ENCODE measurements at regions of chr6 and their contacts with region 1.

Region 1: DNA sequence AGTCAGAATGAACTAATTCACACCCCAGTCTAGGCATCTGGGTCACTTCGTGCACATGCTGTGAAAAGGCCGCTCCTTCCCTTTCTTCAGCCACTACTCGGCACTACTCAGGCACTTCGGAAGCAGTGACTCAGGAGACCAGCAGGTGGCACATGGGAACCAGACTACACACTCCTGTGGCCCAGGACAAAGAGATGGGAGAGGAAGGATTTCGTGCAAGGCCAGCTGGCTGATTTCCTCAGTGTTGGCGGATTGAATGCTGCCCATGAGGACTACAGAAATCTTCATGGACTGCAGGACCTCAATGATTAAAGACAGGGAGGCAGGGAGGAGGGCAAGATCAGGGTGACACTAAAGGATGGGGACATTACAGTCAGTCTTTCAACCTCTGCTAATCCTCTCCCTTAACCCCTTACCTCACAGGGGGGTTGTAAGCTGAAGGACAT is 117.8 kb upstream of the SPACA1 start:
- DNase-seq: peak; percentile 71
- ATAC-seq: peak; percentile 84
- H3K4me3 ChIP-seq: no peak overlapping the region
- H3K27ac ChIP-seq: peak overlapping the region; percentile 6; the same call in 1 of the 2 replicates
- H3K4me1 ChIP-seq: peaks cover 32% of the 10 kb centered on the region
- H3K27me3 ChIP-seq: no peaks in the 10 kb centered on the region
- CTCF ChIP-seq: peak; percentile 92 to 96 (median 92)
- EP300 ChIP-seq: peak in 1 of 2 experiments; percentile 7; a peak in 1 of 4 replicates
- POLR2A ChIP-seq: no peak
- RAD21 ChIP-seq: peak; percentile 98

Region 2: DNA sequence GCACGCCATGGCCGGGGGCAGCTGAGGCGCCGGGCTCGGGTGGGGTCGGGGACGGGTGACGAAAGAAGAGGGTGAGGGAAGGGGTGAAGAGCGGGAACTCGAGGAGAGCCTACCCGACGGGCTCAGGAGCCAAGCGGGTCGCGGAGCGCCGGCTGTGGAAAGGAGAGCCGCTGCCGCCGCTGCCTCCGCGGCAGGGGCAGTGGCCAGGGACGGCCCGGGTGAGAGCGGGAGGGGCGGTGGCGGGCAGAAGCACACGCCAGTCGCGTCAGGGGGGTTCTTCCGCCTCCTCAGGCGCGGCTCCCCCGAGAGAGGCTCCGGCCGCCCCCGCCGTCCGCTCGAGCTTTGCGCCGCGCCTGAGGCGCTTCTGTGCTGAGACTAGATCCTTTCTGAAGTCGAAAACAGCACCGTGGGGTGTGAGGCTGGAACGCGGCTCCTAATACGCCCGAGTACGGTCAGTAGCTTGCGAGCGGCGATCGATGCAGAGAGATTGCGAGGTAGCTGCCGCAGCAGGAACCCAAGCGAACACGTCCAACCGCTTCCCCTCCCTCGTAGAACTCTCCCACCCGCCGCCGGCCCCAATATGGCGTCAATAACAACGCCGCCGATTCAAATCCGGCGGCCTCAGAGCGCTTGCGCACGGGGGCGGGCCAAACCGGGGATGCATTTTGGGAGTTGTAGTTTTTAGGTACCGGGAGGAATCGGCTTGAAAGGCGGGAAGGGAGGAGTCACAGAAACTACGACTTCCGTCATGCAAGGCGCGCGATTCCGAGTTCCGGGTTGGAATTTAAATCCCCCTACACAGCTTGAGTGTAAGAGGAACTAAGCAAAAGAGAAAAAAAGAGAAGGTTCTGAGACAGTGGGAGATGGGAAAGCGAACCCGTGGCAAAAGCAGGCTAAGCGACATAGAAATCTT is 227.9 kb before region 1 on chr6 and contains the start of gene AKIRIN2:
- CTCF ChIA-PET with region 1: interaction called, 6 read pairs
- POLR2A ChIA-PET with region 1: interaction called, 3 read pairs
- RAD21 ChIA-PET with region 1: interaction called, 5 read pairs
- SMC1A ChIA-PET with region 1: interaction called, 4 read pairs
- in situ Hi-C with region 1: no loop called
- intact Hi-C with region 1: loop called (anchors 5 kb)
- DNase-seq: peak; percentile 97
- ATAC-seq: peak; percentile 73
- H3K4me3 ChIP-seq: peak within 1 kb of the TSS; percentile 96
- H3K27ac ChIP-seq: peak within 1 kb of the TSS; percentile 97
- H3K4me1 ChIP-seq: peaks cover 33% of the 10 kb centered on the region
- H3K27me3 ChIP-seq: no peaks in the 10 kb centered on the region
- CTCF ChIP-seq: no peak
- EP300 ChIP-seq: no peak
- POLR2A ChIP-seq: peak; percentile 94
- RAD21 ChIP-seq: no peak
- polyA plus RNA-seq, gene AKIRIN2: 12.7 to 16.8 TPM

Region 3: GRCh38 chr6:87815449-87815848 is 114.4 kb before region 1 on chr6:
- CTCF ChIA-PET with region 1: no interaction called
- POLR2A ChIA-PET with region 1: no interaction called
- RAD21 ChIA-PET with region 1: no interaction called
- SMC1A ChIA-PET with region 1: no interaction called
- in situ Hi-C with region 1: no loop called
- intact Hi-C with region 1: no loop called
- DNase-seq: no peak
- ATAC-seq: no peak
- H3K4me3 ChIP-seq: no peak overlapping the region
- H3K27ac ChIP-seq: no peak overlapping the region
- H3K4me1 ChIP-seq: no peaks in the 10 kb centered on the region
- H3K27me3 ChIP-seq: no peaks in the 10 kb centered on the region
- CTCF ChIP-seq: no peak
- EP300 ChIP-seq: no peak
- POLR2A ChIP-seq: no peak
- RAD21 ChIP-seq: no peak

Region 4: DNA sequence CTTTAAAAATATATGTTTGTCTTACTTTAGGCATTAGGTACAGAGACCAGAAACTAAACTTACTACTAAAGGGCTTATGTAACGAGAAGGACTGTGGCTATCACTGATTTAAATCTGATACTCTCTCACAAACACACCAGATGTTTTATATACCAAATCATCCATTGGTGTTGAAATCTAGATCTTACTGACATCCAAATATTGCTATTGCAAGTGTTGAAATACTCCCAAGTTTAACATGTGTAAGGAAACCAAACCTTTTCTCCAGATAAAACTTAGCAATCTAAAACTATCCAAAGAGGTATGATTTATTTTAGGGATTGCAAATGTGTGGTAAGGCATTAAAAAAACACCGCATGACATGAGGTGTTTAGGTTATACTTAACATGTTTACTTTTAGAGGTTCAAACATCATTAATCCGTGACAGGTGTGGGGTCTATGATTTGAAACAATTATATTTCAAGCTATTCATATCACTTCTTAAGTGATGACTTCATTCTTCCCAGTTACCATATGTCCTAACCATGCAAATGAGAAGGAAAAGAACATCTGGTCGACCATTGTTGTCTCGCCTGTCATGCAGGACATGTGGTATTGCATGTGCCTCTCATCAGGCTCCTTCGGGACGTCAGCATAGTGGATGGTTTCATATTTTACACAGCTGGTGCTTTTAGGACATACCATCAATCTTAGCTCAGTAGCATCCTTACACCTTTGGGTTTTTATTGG is 50.6 kb before region 1 on chr6:
- CTCF ChIA-PET with region 1: no interaction called
- POLR2A ChIA-PET with region 1: no interaction called
- RAD21 ChIA-PET with region 1: no interaction called
- SMC1A ChIA-PET with region 1: no interaction called
- in situ Hi-C with region 1: no loop called
- intact Hi-C with region 1: no loop called
- DNase-seq: no peak
- ATAC-seq: peak; percentile 80
- H3K4me3 ChIP-seq: no peak overlapping the region
- H3K27ac ChIP-seq: no peak overlapping the region
- H3K4me1 ChIP-seq: no peaks in the 10 kb centered on the region
- H3K27me3 ChIP-seq: no peaks in the 10 kb centered on the region
- CTCF ChIP-seq: no peak
- EP300 ChIP-seq: peak; percentile 30 to 70; a peak in 3 of 4 replicates
- POLR2A ChIP-seq: no peak
- RAD21 ChIP-seq: no peak

Region 5: DNA sequence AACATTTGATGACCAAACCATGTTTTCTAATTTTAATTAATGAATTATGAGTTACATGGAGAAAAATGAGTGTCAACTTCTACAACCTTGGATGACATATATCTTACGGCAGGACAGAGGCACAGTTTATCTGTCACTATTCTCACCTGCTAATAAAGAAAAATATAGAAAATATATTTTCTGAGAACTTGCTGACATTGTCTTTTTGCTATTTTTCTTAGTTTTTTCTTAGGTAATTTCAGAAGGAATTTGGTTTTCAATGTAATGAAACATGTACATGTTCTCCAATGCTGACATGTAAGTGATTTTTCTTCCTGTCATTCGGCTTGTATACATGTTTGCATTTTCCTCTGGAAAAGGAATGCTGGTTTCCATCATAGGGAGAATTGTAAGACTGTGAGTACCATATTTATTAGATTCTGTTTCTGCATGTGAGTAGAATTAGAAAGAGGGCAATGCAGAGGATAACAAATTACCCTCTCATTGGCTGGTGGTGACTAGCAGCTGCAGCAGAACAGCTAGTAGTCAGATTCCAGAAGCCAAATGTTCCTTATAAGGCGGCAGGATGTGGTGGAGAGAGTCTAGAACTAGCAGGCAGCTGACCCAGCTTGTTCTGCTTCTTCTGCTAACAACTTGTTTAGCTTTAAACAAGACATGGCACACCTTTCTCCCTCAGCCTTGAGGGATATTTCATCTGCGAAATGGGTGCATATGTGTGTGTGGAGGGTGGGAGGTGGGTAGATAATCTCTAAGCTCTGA is 15.1 kb before region 1 on chr6:
- CTCF ChIA-PET with region 1: interaction called, 9 read pairs
- POLR2A ChIA-PET with region 1: interaction called, 3 read pairs
- RAD21 ChIA-PET with region 1: interaction called, 79 read pairs
- SMC1A ChIA-PET with region 1: interaction called, 52 read pairs
- in situ Hi-C with region 1: no loop called
- intact Hi-C with region 1: no loop called
- DNase-seq: no peak
- ATAC-seq: peak; percentile 39; the same call in 2 of the 3 replicates
- H3K4me3 ChIP-seq: no peak overlapping the region
- H3K27ac ChIP-seq: no peak overlapping the region
- H3K4me1 ChIP-seq: peaks cover 3% of the 10 kb centered on the region; the same call in 1 of the 2 replicates
- H3K27me3 ChIP-seq: no peaks in the 10 kb centered on the region
- CTCF ChIP-seq: no peak
- EP300 ChIP-seq: no peak
- POLR2A ChIP-seq: no peak
- RAD21 ChIP-seq: no peak

Region 6: GRCh38 chr6:88165844-88166492 is 236.1 kb after region 1 on chr6 and contains the start of gene CNR1:
- CTCF ChIA-PET with region 1: interaction called, 50 read pairs
- POLR2A ChIA-PET with region 1: no interaction called
- RAD21 ChIA-PET with region 1: interaction called, 34 read pairs
- SMC1A ChIA-PET with region 1: interaction called, 34 read pairs
- in situ Hi-C with region 1: loop called (anchors 5 kb)
- intact Hi-C with region 1: loop called (anchors 1 kb)
- DNase-seq: no peak
- ATAC-seq: peak; percentile 76
- H3K4me3 ChIP-seq: peak within 1 kb of the TSS; percentile 94
- H3K27ac ChIP-seq: no peak within 1 kb of the TSS; the same call in 1 of the 2 replicates
- H3K4me1 ChIP-seq: no peaks in the 10 kb centered on the region
- H3K27me3 ChIP-seq: 0 out of 4 replicates have a peak, but pooled peaks cover 0 to 6% of the 10 kb centered on the region in 2 experiments
- CTCF ChIP-seq: peak; percentile 24 to 47 (median 33); a peak in 4 of 6 replicates
- EP300 ChIP-seq: no peak
- POLR2A ChIP-seq: peak; percentile 77
- RAD21 ChIP-seq: no peak; the same call in 1 of the 2 replicates
- polyA plus RNA-seq, gene CNR1: 2.2 to 3.1 TPM

Region 7: DNA sequence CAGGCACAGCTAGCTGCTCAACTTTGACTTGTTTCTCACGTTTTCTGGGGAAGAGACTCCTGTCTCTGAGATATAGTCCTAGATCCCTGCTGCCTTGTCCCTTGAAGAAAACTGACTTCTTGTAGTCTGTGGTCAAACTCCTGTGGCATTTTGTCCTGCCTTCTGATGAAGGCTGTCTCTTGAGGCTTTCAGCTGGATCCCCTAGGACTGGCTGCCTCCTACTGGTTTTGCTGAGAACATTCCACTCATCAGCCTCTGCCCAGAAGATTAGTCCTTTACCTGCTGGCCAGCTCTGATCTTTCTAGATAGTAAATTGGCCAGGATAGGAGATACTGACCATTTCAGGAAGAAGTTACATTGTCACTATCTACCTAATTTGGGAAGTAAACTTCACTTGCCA is 308.2 kb after region 1 on chr6:
- CTCF ChIA-PET with region 1: interaction called, 45 read pairs
- POLR2A ChIA-PET with region 1: interaction called, 4 read pairs
- RAD21 ChIA-PET with region 1: interaction called, 21 read pairs
- SMC1A ChIA-PET with region 1: interaction called, 39 read pairs
- in situ Hi-C with region 1: loop called (anchors 5 kb)
- intact Hi-C with region 1: loop called (anchors 1 kb)
- DNase-seq: peak; percentile 33
- ATAC-seq: peak; percentile 92
- H3K4me3 ChIP-seq: no peak overlapping the region
- H3K27ac ChIP-seq: no peak overlapping the region
- H3K4me1 ChIP-seq: peaks cover 3% of the 10 kb centered on the region; the same call in 1 of the 2 replicates
- H3K27me3 ChIP-seq: no peaks in the 10 kb centered on the region
- CTCF ChIP-seq: peak; percentile 64 to 77 (median 66); a peak in 5 of 6 replicates
- EP300 ChIP-seq: no peak
- POLR2A ChIP-seq: no peak
- RAD21 ChIP-seq: peak; percentile 97

Region 8: DNA sequence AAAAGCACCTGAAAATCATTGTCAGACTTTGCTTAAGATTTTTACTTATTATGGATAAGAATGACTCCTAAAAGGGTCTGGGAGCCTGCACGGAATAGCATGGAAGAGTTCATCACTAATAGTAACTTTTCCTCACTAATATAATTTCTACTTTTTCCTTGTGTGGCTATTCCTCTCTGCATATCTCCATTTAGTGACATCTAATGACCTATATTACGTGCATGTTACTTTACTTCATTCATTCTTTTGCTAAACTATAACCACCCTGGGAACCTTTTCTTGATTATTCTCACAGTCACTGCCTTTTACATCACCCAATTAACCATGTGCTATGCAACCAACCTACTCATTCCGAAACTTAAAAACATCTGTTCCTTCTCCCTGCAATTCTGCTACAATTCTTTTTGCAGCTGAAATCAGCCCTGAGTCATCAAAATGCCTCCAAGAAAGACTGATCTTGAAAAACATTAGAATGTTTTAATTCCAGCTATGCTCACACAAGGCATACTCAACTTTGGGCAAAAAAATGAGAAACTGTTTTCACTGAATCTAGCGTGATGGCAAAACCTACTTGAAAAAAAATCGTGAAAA is 720.3 kb after region 1 on chr6:
- CTCF ChIA-PET with region 1: no interaction called
- POLR2A ChIA-PET with region 1: no interaction called
- RAD21 ChIA-PET with region 1: interaction called, 3 read pairs
- SMC1A ChIA-PET with region 1: interaction called, 3 read pairs
- in situ Hi-C with region 1: no loop called
- intact Hi-C with region 1: loop called (anchors 10 kb)
- DNase-seq: peak; percentile 97
- ATAC-seq: peak; percentile 94
- H3K4me3 ChIP-seq: no peak overlapping the region
- H3K27ac ChIP-seq: peak overlapping the region; percentile 83
- H3K4me1 ChIP-seq: peaks cover 11% of the 10 kb centered on the region
- H3K27me3 ChIP-seq: no peaks in the 10 kb centered on the region
- CTCF ChIP-seq: no peak
- EP300 ChIP-seq: peak in 1 of 2 experiments; percentile 94
- POLR2A ChIP-seq: no peak
- RAD21 ChIP-seq: peak; percentile 41

Region 9: DNA sequence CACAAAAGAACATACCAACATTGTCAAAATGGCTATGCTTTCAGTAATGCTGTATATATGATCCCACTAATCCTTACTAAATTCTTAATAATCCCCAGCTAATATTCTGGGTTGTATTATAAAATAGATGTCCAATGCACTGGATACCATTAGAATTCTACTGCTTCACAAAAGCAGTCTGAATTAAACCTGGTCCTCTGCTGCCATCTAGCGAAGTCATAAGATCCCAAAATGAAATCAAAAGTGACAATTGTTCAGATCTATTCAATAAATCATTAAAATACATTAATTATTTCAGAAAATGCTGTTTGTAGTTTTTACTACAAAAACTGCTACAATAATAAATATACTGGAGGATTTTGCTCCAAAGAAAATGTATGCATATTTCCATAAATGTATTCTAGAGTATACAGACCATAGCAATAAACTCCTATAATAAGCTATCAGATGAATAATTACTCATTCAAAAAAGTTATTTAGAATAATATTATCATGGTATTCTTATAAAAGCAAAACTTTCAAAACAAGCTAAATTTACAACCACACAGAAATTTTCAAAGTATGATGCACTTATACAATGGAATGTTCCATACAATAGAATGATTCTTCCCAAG is 941.0 kb after region 1 on chr6:
- CTCF ChIA-PET with region 1: interaction called, 94 read pairs
- POLR2A ChIA-PET with region 1: interaction called, 3 read pairs
- RAD21 ChIA-PET with region 1: interaction called, 81 read pairs
- SMC1A ChIA-PET with region 1: interaction called, 118 read pairs
- in situ Hi-C with region 1: loop called (anchors 5 kb)
- intact Hi-C with region 1: loop called (anchors 1 kb)
- DNase-seq: peak; percentile 39
- ATAC-seq: peak; percentile 78
- H3K4me3 ChIP-seq: no peak overlapping the region
- H3K27ac ChIP-seq: no peak overlapping the region
- H3K4me1 ChIP-seq: peaks cover 10% of the 10 kb centered on the region
- H3K27me3 ChIP-seq: no peaks in the 10 kb centered on the region
- CTCF ChIP-seq: peak; percentile 46 to 70 (median 55); a peak in 5 of 6 replicates
- EP300 ChIP-seq: no peak
- POLR2A ChIP-seq: no peak
- RAD21 ChIP-seq: peak; percentile 89

Measured in GM12878 (cell line).